Activated CD4-positive, alpha-beta T cell treated with anti-CD3 and anti-CD28 coated beads, Interleukin-2, amount 10 ng/mL, durations not matched to agents 24 days and 14 days (primary cell): ENCODE measurements at regions of chr2 and their contacts with region 1.

Region 1: DNA sequence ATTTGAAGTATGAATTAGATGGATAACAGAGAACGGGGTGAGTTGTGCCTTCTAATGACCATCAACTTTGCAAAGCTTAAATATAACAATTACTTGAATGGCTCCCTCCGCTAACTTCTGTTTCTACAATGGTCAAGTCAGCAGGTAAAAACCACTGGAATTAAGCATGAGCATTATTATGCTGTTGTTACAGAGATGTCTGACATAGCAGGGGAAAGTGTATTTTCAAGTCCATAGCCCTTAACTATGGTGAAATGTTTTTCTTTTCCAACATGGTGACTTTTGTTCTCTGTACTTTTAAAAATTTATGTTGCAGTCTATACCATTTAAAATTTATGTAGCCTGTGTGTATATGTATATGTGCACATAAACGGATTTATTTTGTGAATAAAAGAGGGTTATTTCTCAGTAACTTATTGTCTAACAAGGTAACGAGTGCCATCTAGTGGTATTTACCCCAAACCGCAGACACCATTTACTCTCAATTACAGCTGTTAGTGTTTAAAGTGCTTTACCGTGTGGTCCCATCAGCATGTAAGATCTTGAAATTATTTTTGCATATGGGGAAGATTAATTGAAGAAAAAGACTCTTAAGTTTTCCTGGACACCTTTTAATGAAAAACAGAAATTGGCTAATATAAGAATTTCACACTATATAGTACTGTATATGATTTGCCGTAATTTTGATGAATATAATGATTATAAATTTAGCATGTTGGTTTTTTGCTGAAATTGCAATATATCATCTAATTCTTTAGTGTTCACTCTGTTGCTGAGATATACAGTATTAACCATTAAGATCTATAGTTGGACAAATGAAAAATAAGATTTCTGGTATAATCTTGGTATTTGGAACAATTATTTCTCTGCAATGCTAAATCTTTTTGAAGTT is 78.2 kb downstream of the UBE2E3 start:
- DNase-seq: peak; percentile 79
- H3K4me3 Mint-ChIP-seq: no peak overlapping the region
- H3K27ac Mint-ChIP-seq: no peak overlapping the region
- H3K4me1 Mint-ChIP-seq: peaks cover 5% of the 10 kb centered on the region
- H3K27me3 Mint-ChIP-seq: no peaks in the 10 kb centered on the region

Region 2: DNA sequence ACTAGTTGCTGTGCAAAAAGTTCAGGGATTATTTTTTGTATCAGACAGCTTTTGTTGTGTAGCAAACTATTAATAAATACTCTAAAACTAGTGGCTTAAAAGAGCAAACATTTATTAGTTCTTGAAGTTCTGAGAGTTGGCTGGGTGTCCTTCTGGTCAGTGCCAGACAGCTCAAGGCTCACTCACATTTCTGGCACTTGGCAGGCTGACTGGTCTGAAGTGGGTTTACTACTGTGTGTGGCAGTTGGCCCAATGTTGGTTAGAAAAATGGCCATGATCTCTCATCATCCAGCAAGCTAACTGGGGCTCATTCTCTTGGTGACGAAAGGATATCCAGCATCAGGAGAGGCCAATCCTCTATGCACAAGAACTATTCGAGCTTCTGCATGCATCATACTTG is 1125.8 kb before region 1 on chr2:
- intact Hi-C with region 1: no loop called
- DNase-seq: no peak
- H3K4me3 Mint-ChIP-seq: no peak overlapping the region
- H3K27ac Mint-ChIP-seq: no peak overlapping the region
- H3K4me1 Mint-ChIP-seq: no peaks in the 10 kb centered on the region
- H3K27me3 Mint-ChIP-seq: no peaks in the 10 kb centered on the region

Region 3: GRCh38 chr2:180124273-180125139 is 934.1 kb before region 1 on chr2:
- intact Hi-C with region 1: loop called (anchors 1 kb)
- DNase-seq: peak; percentile 61
- H3K4me3 Mint-ChIP-seq: no peak overlapping the region
- H3K27ac Mint-ChIP-seq: no peak overlapping the region
- H3K4me1 Mint-ChIP-seq: peaks cover 3% of the 10 kb centered on the region
- H3K27me3 Mint-ChIP-seq: peaks cover 25% of the 10 kb centered on the region

Region 4: DNA sequence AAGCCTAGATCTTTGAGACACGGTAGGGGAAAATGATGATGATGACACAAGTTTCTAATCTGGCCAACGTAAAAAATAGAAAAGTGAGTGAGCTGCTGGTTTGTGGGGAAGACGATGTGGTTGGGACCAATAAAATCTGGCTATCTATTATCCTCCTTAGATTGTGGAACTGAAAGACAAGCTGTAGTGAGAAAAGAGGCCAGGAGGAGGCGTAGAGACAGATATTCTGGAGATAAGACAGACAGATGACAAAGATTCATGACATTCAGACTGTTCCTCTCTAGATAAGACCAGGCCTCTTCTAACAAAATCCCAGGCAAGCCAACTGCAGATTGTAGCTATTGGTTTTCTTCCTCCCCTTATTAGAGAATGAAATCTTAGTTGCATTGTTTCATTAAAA is 454.5 kb before region 1 on chr2:
- intact Hi-C with region 1: loop called (anchors 1 kb)
- DNase-seq: no peak
- H3K4me3 Mint-ChIP-seq: no peak overlapping the region
- H3K27ac Mint-ChIP-seq: no peak overlapping the region
- H3K4me1 Mint-ChIP-seq: no peaks in the 10 kb centered on the region
- H3K27me3 Mint-ChIP-seq: no peaks in the 10 kb centered on the region

Region 5: DNA sequence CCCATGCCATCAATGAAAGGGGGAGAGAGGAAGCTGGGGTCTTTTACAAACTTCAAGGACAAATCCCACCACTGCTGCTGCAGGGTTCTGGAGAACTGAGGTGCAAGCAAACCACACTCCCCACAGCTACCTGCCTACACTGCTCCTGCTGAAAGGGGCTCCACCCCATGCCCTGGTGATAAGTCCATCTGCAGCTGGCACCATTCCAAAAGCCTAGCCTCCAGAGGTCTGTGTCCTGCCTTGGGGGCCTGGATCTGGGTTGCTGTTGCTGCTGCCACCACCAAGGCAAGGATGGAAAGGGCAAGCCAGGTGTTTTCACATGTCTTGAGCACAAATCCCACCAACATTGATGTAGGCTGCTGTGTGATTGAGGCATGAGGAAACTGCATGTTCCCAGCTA is 175.7 kb before region 1 on chr2:
- intact Hi-C with region 1: loop called (anchors 10 kb)
- DNase-seq: no peak
- H3K4me3 Mint-ChIP-seq: no peak overlapping the region
- H3K27ac Mint-ChIP-seq: no peak overlapping the region
- H3K4me1 Mint-ChIP-seq: no peaks in the 10 kb centered on the region
- H3K27me3 Mint-ChIP-seq: peaks cover 5% of the 10 kb centered on the region